ENCODE measurements at regions of chr11 and their contacts with region 1.

Region 1: DNA sequence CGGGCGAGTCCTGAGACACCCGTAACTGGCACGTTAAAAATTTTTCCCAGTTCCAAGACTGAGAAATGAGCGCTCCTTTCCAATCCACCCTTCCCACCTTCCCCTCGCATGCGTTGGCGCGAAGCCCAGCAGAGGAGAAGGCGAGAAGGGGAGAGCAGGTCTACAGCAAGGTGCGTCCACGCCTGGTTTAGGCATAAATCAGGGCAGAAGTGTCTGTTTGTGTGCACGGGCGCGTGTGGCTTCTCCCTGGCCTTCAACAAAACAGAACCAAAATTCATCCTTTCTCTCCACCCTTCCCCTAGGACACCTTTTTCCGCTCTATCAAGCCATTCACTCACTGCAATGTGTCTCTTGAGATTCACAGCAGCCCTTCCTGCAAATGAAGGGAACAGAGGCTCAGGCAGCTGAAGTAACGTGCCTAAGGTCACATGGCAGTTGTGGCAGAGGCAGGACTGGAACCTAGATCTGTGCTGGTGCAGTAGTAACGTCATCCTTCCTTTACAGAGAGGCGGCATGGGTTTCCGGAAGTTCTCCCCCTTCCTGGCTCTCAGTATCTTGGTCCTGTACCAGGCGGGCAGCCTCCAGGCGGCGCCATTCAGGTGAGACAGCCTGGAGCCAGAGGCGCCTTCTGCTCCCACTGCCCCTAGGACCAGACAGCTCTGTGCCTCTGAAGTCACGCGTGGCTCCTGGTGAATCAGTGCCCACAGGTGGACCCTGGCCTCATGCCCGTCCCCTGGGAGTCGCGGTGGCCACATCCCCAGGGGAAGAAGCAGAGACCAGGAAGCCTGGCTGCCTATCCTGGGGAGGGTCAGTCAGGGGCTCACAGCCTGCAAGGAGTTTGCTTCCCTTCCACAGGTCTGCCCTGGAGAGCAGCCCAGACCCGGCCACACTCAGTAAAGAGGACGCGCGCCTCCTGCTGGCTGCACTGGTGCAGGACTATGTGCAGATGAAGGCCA is 1.1 kb downstream of the CALCB start:
- DNase-seq: peak; percentile 20
- H3K4me3 ChIP-seq: peak overlapping the region in 3 of 4 donors; percentile 16 to 54 (median 30)
- H3K27ac ChIP-seq: no peak overlapping the region
- H3K4me1 ChIP-seq: peaks cover 14 to 21% (median 18%) of the 10 kb centered on the region in 3 donors
- H3K27me3 ChIP-seq: peaks cover 0 to 67% (median 3%) of the 10 kb centered on the region in 4 donors
- CTCF ChIP-seq: peak; percentile 32 to 72 (median 64)
- POLR2A ChIP-seq: no peak

Region 2: GRCh38 chr11:14784230-14784629 is 290.3 kb before region 1 on chr11:
- intact Hi-C with region 1: no loop called
- DNase-seq: no peak
- H3K4me3 ChIP-seq: no peak overlapping the region
- H3K27ac ChIP-seq: no peak overlapping the region
- H3K4me1 ChIP-seq: no peaks in the 10 kb centered on the region
- H3K27me3 ChIP-seq: no peaks in the 10 kb centered on the region
- CTCF ChIP-seq: no peak
- POLR2A ChIP-seq: no peak

Region 3: GRCh38 chr11:14916403-14916802 is 158.1 kb before region 1 on chr11:
- intact Hi-C with region 1: loop called (anchors 5 kb)
- DNase-seq: no peak
- H3K4me3 ChIP-seq: no peak overlapping the region
- H3K27ac ChIP-seq: no peak overlapping the region
- H3K4me1 ChIP-seq: no peaks in the 10 kb centered on the region
- H3K27me3 ChIP-seq: no peaks in the 10 kb centered on the region
- CTCF ChIP-seq: no peak
- POLR2A ChIP-seq: no peak

Region 4: GRCh38 chr11:15336021-15336420 is 261.5 kb after region 1 on chr11:
- intact Hi-C with region 1: no loop called
- DNase-seq: no peak
- H3K4me3 ChIP-seq: no peak overlapping the region
- H3K27ac ChIP-seq: no peak overlapping the region
- H3K4me1 ChIP-seq: peaks cover 0 to under 1% (median 0%) of the 10 kb centered on the region in 3 donors
- H3K27me3 ChIP-seq: no peaks in the 10 kb centered on the region
- CTCF ChIP-seq: no peak
- POLR2A ChIP-seq: no peak

Region 5: GRCh38 chr11:15406851-15407351 is 332.4 kb after region 1 on chr11:
- intact Hi-C with region 1: no loop called
- DNase-seq: no peak
- H3K4me3 ChIP-seq: no peak overlapping the region
- H3K27ac ChIP-seq: no peak overlapping the region
- H3K4me1 ChIP-seq: no peaks in the 10 kb centered on the region
- H3K27me3 ChIP-seq: no peaks in the 10 kb centered on the region
- CTCF ChIP-seq: no peak
- POLR2A ChIP-seq: no peak

Region 6: GRCh38 chr11:15519124-15519791 is 444.8 kb after region 1 on chr11:
- intact Hi-C with region 1: no loop called
- DNase-seq: no peak
- H3K4me3 ChIP-seq: no peak overlapping the region
- H3K27ac ChIP-seq: no peak overlapping the region
- H3K4me1 ChIP-seq: no peaks in the 10 kb centered on the region
- H3K27me3 ChIP-seq: no peaks in the 10 kb centered on the region
- CTCF ChIP-seq: no peak
- POLR2A ChIP-seq: no peak